Activated T-helper 1 cell treated with anti-CD3 and anti-CD28 coated beads, Interleukin-12 subunit alpha, Interleukin-12 subunit beta, Interleukin-2, Interleukin-4 antibody, amounts not matched to agents 30 ng/mL and 10 ng/mL and 1 ng/mL, durations not matched to agents 14 hours and 24 hours and 36 hours (primary cell): ENCODE measurements at regions of chr20 and their contacts with region 1.

Region 1: GRCh38 chr20:64079273-64080012 is at the start of gene RGS19:
- DNase-seq: peak; percentile 75
- H3K4me3 Mint-ChIP-seq: peak within 1 kb of the TSS; percentile 93
- H3K27ac Mint-ChIP-seq: peak within 1 kb of the TSS; percentile 83
- H3K4me1 Mint-ChIP-seq: peaks cover 24% of the 10 kb centered on the region
- H3K27me3 Mint-ChIP-seq: peaks cover 8% of the 10 kb centered on the region
- total RNA-seq, gene RGS19: 54.7 and 55.9 TPM in 2 replicates

Region 2: GRCh38 chr20:63216041-63216848 is 863.2 kb before region 1 on chr20 and contains the start of gene YTHDF1:
- intact Hi-C with region 1: loop called (anchors 5 kb)
- DNase-seq: peak; percentile 97
- H3K4me3 Mint-ChIP-seq: peak within 1 kb of the TSS; percentile 98
- H3K27ac Mint-ChIP-seq: peak within 1 kb of the TSS; percentile 89
- H3K4me1 Mint-ChIP-seq: peaks cover 47% of the 10 kb centered on the region
- H3K27me3 Mint-ChIP-seq: no peaks in the 10 kb centered on the region
- total RNA-seq, gene YTHDF1: 48.8 and 49.0 TPM in 2 replicates

Region 3: GRCh38 chr20:63894358-63895201 is 184.9 kb before region 1 on chr20 and contains the start of gene DNAJC5:
- intact Hi-C with region 1: loop called (anchors 5 kb)
- DNase-seq: peak; percentile 98
- H3K4me3 Mint-ChIP-seq: peak within 1 kb of the TSS; percentile 89
- H3K27ac Mint-ChIP-seq: peak within 1 kb of the TSS; percentile 96
- H3K4me1 Mint-ChIP-seq: peaks cover 42% of the 10 kb centered on the region
- H3K27me3 Mint-ChIP-seq: no peaks in the 10 kb centered on the region
- total RNA-seq, gene DNAJC5: 47.5 and 48.2 TPM in 2 replicates

Region 4: DNA sequence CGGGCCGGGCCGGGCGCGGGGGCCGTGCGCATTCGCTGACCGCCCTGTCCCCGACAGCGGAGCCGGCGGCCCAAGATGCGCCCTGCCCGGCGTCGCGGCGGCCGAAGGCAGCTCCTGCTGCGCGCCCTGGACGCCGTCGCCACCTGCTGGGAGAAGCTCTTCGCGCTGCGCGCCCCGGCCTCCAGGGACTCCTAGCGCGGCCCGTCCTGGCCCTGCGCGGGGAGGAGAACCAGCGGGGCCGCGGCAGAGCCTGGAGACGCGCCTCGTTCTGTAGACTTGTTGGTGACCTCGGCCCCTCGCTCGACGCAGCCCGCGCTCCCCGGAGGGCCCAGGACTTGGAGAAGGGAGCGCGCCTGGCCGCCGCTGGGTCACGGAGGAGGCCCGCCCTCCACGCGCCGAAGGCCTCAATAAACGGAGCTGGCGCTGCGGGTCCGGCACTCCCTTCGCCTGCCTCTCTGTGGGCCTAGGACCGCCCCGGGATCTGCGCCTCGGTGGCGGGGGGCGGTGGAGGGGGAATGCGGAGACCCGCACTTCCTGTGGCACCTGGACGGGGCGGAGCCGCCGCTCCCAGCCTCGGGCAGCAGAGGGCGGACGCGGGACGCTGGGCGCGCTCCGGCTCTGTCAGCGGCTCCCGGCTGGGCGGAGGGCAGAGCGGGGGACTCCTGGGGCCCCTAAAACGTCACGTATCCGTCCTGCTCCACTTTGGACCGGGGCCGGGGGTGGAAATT is 40.7 kb before region 1 on chr20:
- intact Hi-C with region 1: loop called (anchors 5 kb)
- DNase-seq: peak; percentile 77
- H3K4me3 Mint-ChIP-seq: peak overlapping the region; percentile 73
- H3K27ac Mint-ChIP-seq: no peak overlapping the region
- H3K4me1 Mint-ChIP-seq: peaks cover 51% of the 10 kb centered on the region
- H3K27me3 Mint-ChIP-seq: peaks cover 3% of the 10 kb centered on the region

Region 5: GRCh38 chr20:64255361-64256281 is 176.2 kb after region 1 on chr20 and contains the start of gene PCMTD2:
- intact Hi-C with region 1: loop called (anchors 1 kb)
- DNase-seq: peak; percentile 86
- H3K4me3 Mint-ChIP-seq: peak within 1 kb of the TSS; percentile 98
- H3K27ac Mint-ChIP-seq: peak within 1 kb of the TSS; percentile 97
- H3K4me1 Mint-ChIP-seq: peaks cover 46% of the 10 kb centered on the region
- H3K27me3 Mint-ChIP-seq: peaks cover 9% of the 10 kb centered on the region
- total RNA-seq, gene PCMTD2: 32.2 and 39.5 TPM in 2 replicates